Activated T-helper 2 cell treated with anti-CD3 and anti-CD28 coated beads, Interferon-gamma antibody, Interleukin-2, Interleukin-4, amounts not matched to agents 10 μg/mL and 5 μg/mL and 100 μg/mL, durations not matched to agents 14 hours and 24 hours and 36 hours (primary cell): ENCODE measurements at regions of chr18 and their contacts with region 1.

Region 1: GRCh38 chr18:55589625-55590291 is 1.8 kb upstream of the TCF4 start:
- DNase-seq: peak; percentile 84
- H3K4me3 Mint-ChIP-seq: peak overlapping the region; percentile 92
- H3K27ac Mint-ChIP-seq: peak overlapping the region; percentile 68
- H3K4me1 Mint-ChIP-seq: peaks cover 21% of the 10 kb centered on the region
- H3K27me3 Mint-ChIP-seq: peaks cover 24% of the 10 kb centered on the region

Region 2: DNA sequence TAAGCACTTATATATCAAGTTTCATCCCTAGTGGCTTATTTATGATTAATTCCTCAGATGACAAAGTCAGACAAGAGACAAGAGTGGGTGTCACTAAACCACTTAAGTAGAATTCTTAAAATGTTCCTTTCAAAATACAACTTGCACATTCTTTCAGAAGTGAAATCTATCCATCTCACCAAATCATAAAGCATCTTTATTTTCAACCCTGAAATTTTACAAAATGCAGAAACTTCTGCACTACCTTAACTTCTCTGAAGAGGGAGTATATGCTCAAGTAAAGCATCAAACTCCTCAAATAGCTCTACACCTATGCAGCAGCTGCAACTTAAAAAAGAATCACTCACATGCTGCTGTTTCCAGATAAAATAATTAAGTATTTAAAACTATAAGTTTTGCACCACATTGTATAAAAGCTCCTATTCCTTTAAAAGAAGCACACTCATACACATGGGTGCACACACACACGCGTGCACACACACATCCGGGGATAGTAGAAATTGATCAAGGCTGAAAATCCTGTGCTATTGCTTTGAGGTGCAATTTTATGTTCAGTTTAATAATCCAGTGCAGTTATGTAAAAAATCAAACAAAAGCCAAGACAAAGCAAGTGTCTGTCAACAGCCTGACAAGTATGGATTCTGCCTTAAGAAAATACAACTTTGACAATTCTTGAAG is 246.2 kb before region 1 on chr18:
- intact Hi-C with region 1: loop called (anchors 10 kb)
- DNase-seq: no peak
- H3K4me3 Mint-ChIP-seq: no peak overlapping the region
- H3K27ac Mint-ChIP-seq: no peak overlapping the region
- H3K4me1 Mint-ChIP-seq: peaks cover 4% of the 10 kb centered on the region
- H3K27me3 Mint-ChIP-seq: peaks cover 7% of the 10 kb centered on the region

Region 3: GRCh38 chr18:55415258-55415871 is 174.4 kb before region 1 on chr18:
- intact Hi-C with region 1: loop called (anchors 5 kb)
- DNase-seq: peak; percentile 53
- H3K4me3 Mint-ChIP-seq: no peak overlapping the region
- H3K27ac Mint-ChIP-seq: no peak overlapping the region
- H3K4me1 Mint-ChIP-seq: peaks cover 7% of the 10 kb centered on the region
- H3K27me3 Mint-ChIP-seq: peaks cover 4% of the 10 kb centered on the region

Region 4: GRCh38 chr18:55489034-55489986 is 100.4 kb before region 1 on chr18:
- intact Hi-C with region 1: loop called (anchors 2 kb)
- DNase-seq: no peak
- H3K4me3 Mint-ChIP-seq: peak overlapping the region; percentile 43
- H3K27ac Mint-ChIP-seq: peak overlapping the region; percentile 85
- H3K4me1 Mint-ChIP-seq: peaks cover 20% of the 10 kb centered on the region
- H3K27me3 Mint-ChIP-seq: peaks cover 28% of the 10 kb centered on the region

Region 5: GRCh38 chr18:55539240-55539639 is 50.5 kb before region 1 on chr18:
- intact Hi-C with region 1: no loop called
- DNase-seq: no peak
- H3K4me3 Mint-ChIP-seq: no peak overlapping the region
- H3K27ac Mint-ChIP-seq: no peak overlapping the region
- H3K4me1 Mint-ChIP-seq: no peaks in the 10 kb centered on the region
- H3K27me3 Mint-ChIP-seq: no peaks in the 10 kb centered on the region

Region 6: GRCh38 chr18:55781481-55781957 is 191.8 kb after region 1 on chr18:
- intact Hi-C with region 1: loop called (anchors 5 kb)
- DNase-seq: no peak
- H3K4me3 Mint-ChIP-seq: no peak overlapping the region
- H3K27ac Mint-ChIP-seq: no peak overlapping the region
- H3K4me1 Mint-ChIP-seq: peaks cover 12% of the 10 kb centered on the region
- H3K27me3 Mint-ChIP-seq: peaks cover 51% of the 10 kb centered on the region

Region 7: DNA sequence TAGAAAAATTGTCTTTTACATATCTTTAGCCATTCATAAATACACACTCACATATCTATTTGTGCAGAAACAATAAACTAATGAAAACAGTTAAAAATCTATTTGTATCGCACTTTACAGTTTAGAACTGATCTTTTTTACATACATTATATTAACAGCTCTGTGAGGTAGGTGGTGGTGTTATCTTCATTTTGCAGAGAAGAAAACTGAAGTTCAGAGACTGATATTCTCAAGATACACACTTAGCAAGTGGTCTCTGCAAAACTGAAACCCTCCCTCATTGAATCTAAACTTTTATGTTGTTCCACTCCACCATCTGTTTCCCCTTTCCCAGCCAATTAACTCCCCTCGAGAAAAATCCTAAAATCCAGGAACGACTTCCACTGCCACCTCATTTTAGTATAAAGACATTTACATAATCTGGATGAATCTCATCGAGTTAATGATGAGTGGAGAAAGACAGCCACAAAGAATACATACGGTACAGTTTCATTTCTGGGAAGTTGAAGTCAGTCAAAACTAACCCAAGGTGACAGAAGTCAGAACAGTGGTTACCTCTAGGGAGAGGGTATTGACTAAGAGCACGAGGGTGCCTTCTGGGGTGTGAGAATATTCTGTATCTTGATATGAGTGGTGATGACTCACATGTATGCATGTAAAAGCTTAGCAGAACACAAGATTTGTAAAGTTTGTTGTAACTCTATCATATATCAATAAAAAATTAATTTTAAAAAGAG is 522.4 kb after region 1 on chr18:
- intact Hi-C with region 1: loop called (anchors 5 kb)
- DNase-seq: peak; percentile 12
- H3K4me3 Mint-ChIP-seq: no peak overlapping the region
- H3K27ac Mint-ChIP-seq: peak overlapping the region; percentile 60
- H3K4me1 Mint-ChIP-seq: peaks cover 13% of the 10 kb centered on the region
- H3K27me3 Mint-ChIP-seq: peaks cover 2% of the 10 kb centered on the region

Region 8: GRCh38 chr18:56638271-56639093 is 1048.7 kb after region 1 on chr18 and contains the start of gene TXNL1:
- intact Hi-C with region 1: loop called (anchors 10 kb)
- DNase-seq: peak; percentile 98
- H3K4me3 Mint-ChIP-seq: peak within 1 kb of the TSS; percentile 99
- H3K27ac Mint-ChIP-seq: peak within 1 kb of the TSS; percentile 87
- H3K4me1 Mint-ChIP-seq: peaks cover 36% of the 10 kb centered on the region
- H3K27me3 Mint-ChIP-seq: no peaks in the 10 kb centered on the region
- total RNA-seq, gene TXNL1: 95.1 and 96.3 TPM in 2 replicates